ENCODE measurements at regions of chr6 and their contacts with region 1.

Region 1: GRCh38 chr6:26475823-26476729 is 18.3 kb downstream of the BTN2A1 start:
- DNase-seq: no peak
- ATAC-seq: no peak
- H3K4me3 ChIP-seq: no peak overlapping the region
- H3K27ac ChIP-seq: no peak overlapping the region
- H3K4me1 ChIP-seq: no peaks in the 10 kb centered on the region
- H3K27me3 ChIP-seq: no peaks in the 10 kb centered on the region
- CTCF ChIP-seq: no peak

Region 2: DNA sequence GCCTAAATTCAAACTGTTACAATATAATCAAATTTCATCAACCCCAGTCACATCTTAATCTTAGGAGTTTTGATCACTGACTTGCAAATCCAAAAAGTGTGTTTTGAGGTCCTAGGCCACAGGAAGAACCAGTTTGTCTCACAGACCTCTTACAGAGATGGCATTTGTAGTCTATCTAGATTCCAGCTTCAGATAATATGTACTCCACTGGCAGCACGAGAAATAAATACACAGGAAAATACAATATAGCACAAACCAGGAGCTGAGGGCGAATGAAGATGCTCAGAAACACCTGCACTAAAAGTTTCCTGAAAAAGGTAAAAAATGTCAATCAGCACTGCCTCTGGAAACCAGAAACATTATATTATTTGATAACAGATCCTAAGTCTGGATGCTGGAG is 36.4 kb before region 1 on chr6:
- intact Hi-C with region 1: no loop called
- DNase-seq: no peak
- ATAC-seq: no peak
- H3K4me3 ChIP-seq: peak overlapping the region; percentile 70
- H3K27ac ChIP-seq: peak overlapping the region; percentile 72
- H3K4me1 ChIP-seq: peaks cover 8% of the 10 kb centered on the region
- H3K27me3 ChIP-seq: no peaks in the 10 kb centered on the region
- CTCF ChIP-seq: no peak

Region 3: DNA sequence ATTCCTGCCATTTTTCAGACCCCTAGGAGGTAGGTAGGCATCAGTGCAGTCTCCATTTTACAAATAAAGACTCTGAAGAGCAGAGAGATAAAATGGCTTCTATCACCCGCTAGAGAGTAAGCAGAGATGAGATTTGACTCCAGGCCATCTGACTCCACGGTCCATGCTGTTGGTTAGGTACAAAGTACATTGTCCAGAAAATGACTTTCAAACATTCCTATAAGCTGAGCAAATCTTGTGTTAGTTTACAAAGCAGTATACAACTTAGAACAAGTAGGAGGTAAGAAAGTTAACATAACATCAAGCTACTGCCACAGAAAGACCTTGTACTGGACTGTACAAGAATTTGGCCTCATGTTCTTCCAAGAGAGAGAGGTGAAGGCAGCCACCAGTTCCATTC is 38.9 kb after region 1 on chr6:
- intact Hi-C with region 1: loop called in 1 of 2 experiments (anchors 2 kb)
- DNase-seq: no peak
- ATAC-seq: no peak
- H3K4me3 ChIP-seq: no peak overlapping the region
- H3K27ac ChIP-seq: no peak overlapping the region
- H3K4me1 ChIP-seq: peaks cover under 1% of the 10 kb centered on the region
- H3K27me3 ChIP-seq: no peaks in the 10 kb centered on the region
- CTCF ChIP-seq: no peak

Region 4: GRCh38 chr6:27002447-27002846 is 526.4 kb after region 1 on chr6:
- intact Hi-C with region 1: no loop called
- DNase-seq: peak in 1 of 2 donors; percentile 46
- ATAC-seq: no peak
- H3K4me3 ChIP-seq: no peak overlapping the region
- H3K27ac ChIP-seq: no peak overlapping the region
- H3K4me1 ChIP-seq: no peaks in the 10 kb centered on the region
- H3K27me3 ChIP-seq: no peaks in the 10 kb centered on the region
- CTCF ChIP-seq: no peak

Measured in psoas muscle (tissue), 8 donors.